ENCODE measurements at regions of chr1 and their contacts with region 1.

Region 1: GRCh38 chr1:182391362-182392044 is at the start of gene GLUL:
- DNase-seq: peak; percentile 91 to 96
- H3K4me3 ChIP-seq: peak within 1 kb of the TSS; percentile 90 to 92
- H3K27ac ChIP-seq: peak within 1 kb of the TSS; percentile 94 to 98
- H3K4me1 ChIP-seq: peaks cover 4 to 18% of the 10 kb centered on the region in 2 donors
- H3K27me3 ChIP-seq: no peaks in the 10 kb centered on the region
- CTCF ChIP-seq: peak in 1 of 3 experiments; percentile 14
- total RNA-seq, gene GLUL: 1,017 TPM

Region 2: DNA sequence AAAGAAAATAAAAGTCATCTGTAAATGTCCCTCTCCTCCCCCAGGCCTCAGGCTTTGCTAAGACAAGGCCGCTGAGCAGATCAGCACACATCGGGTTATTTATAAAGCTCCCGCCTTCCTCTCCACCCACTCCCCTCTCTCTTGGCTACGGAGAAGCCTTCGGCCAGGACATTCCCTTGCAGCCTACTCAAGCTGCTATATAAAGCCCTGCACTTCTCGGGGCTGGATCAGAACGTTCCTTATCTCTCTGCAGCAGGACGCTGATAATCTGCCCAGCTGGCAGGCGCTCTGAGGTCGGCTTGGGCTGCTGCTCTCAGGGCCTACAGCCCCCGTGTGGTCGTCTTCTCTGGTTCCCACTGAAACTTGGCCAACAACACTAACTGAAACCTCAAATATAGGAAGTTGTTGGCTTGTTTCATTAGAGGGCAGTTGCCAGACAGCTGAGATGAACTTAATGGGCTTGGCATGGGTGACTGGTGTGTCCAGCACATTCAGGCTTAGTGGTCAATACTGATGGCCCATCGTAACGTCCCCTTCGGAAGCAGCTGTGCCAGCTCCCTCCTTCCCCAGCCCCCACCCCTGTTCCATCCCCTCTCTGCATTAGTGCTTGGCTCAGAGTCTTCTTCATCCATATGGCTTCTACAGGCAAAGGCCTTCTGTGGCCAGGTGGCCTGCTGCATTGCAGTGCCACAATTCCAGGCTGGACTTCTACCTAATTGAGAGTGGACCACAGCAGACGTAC is 1238.4 kb before region 1 on chr1:
- intact Hi-C with region 1: loop called (anchors 10 kb)
- DNase-seq: peak; percentile 72 to 95
- H3K4me3 ChIP-seq: peak overlapping the region in 1 of 2 donors; percentile 5
- H3K27ac ChIP-seq: peak overlapping the region; percentile 81 to 92
- H3K4me1 ChIP-seq: peaks cover 8 to 20% of the 10 kb centered on the region in 2 donors
- H3K27me3 ChIP-seq: no peaks in the 10 kb centered on the region
- CTCF ChIP-seq: peak in 2 of 3 experiments; percentile 31 to 45

Region 3: DNA sequence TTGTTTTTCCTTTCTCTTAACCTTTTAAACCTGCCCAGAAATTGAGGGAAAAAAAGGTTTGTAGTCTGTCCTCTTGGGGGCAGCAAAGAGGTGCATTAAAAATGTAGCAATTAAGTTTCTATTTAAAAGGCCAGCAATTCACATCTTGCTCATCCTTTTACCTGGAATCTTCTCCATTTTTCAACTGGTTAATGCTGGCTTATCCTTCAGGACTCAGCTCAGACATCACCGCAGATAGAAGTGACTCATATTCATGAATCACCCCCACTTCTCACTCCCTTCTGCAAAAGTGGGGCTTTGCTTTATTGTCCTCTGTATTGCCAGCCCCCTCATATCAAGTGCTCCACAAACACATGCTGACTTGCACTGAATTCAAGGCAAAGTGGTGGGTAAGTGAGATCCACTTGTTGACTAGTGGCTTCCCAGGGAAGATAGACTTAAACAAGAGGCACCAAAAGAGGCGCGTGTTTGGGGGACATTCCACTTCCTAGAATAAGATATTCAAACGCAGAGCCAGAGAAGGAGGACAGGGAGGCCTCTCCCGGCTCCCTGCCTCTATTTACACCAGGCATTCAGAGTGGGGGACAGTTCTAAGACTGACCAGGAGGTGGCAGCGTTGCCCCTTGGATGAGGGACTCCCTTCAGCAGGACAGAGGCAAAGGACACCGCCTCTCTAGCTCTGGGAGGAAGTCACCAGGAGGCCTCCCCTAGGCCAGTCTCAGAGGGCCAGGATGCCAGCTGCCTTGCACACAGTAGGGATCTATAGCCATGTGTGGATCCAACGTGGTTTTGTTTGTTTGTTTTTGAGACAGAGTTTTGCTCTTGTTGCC is 306.8 kb before region 1 on chr1:
- intact Hi-C with region 1: loop called (anchors 1 kb)
- DNase-seq: peak; percentile 63 to 93
- H3K4me3 ChIP-seq: no peak overlapping the region
- H3K27ac ChIP-seq: no peak overlapping the region
- H3K4me1 ChIP-seq: no peaks in the 10 kb centered on the region
- H3K27me3 ChIP-seq: no peaks in the 10 kb centered on the region
- CTCF ChIP-seq: peak; percentile 82 to 84 (median 82)

Region 4: GRCh38 chr1:182198049-182198501 is 193.4 kb before region 1 on chr1:
- intact Hi-C with region 1: loop called (anchors 5 kb)
- DNase-seq: no peak
- H3K4me3 ChIP-seq: no peak overlapping the region
- H3K27ac ChIP-seq: peak overlapping the region; percentile 48 to 56
- H3K4me1 ChIP-seq: peaks cover 8 to 12% of the 10 kb centered on the region in 2 donors
- H3K27me3 ChIP-seq: no peaks in the 10 kb centered on the region
- CTCF ChIP-seq: peak in 1 of 3 experiments; percentile 16

Region 5: GRCh38 chr1:182348961-182349747 is 42.3 kb before region 1 on chr1:
- intact Hi-C with region 1: loop called (anchors 2 kb)
- DNase-seq: peak; percentile 54 to 83
- H3K4me3 ChIP-seq: no peak overlapping the region
- H3K27ac ChIP-seq: peak overlapping the region; percentile 50 to 62
- H3K4me1 ChIP-seq: peaks cover 4 to 9% of the 10 kb centered on the region in 2 donors
- H3K27me3 ChIP-seq: no peaks in the 10 kb centered on the region
- CTCF ChIP-seq: no peak

Region 6: GRCh38 chr1:182527680-182528079 is 136.2 kb after region 1 on chr1:
- intact Hi-C with region 1: no loop called
- DNase-seq: no peak
- H3K4me3 ChIP-seq: no peak overlapping the region
- H3K27ac ChIP-seq: no peak overlapping the region
- H3K4me1 ChIP-seq: no peaks in the 10 kb centered on the region
- H3K27me3 ChIP-seq: no peaks in the 10 kb centered on the region
- CTCF ChIP-seq: no peak